GM12878 (cell line): ENCODE measurements at regions of chr12 and their contacts with region 1.

Region 1: GRCh38 chr12:98332642-98333041 is 182.7 kb upstream of the TMPO start:
- DNase-seq: peak; percentile 64
- ATAC-seq: peak; percentile 91
- H3K4me3 ChIP-seq: no peak overlapping the region
- H3K27ac ChIP-seq: no peak overlapping the region
- H3K4me1 ChIP-seq: no peaks in the 10 kb centered on the region
- H3K27me3 ChIP-seq: peaks cover 0 to 3% of the 10 kb centered on the region in 2 experiments; a peak in 1 of 4 replicates
- CTCF ChIP-seq: peak; percentile 12 to 57 (median 18); a peak in 3 of 6 replicates
- EP300 ChIP-seq: peak in 1 of 2 experiments; percentile 8; a peak in 1 of 4 replicates
- POLR2A ChIP-seq: no peak
- RAD21 ChIP-seq: no peak

Region 2: DNA sequence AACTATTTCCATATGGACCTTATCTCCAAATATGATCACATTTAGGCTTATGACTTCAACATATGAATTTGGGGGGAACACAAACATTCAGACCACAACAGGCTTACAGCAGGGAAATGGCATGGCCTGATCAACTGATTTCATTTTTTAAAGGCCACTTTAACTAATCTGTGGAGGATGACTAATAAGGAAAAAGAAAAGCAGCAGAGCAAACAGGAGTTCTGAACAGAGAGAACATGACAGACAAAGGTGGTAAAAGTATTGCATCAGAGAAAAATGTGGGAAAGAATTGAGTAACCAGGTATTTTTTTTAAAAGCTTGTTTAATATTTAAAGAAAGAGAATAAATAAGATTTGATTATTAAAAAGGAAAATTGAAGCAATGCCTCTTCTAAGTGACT is 183.4 kb before region 1 on chr12:
- CTCF ChIA-PET with region 1: interaction called, 8 read pairs
- POLR2A ChIA-PET with region 1: interaction called, 4 read pairs
- RAD21 ChIA-PET with region 1: interaction called, 15 read pairs
- SMC1A ChIA-PET with region 1: interaction called, 21 read pairs
- in situ Hi-C with region 1: no loop called
- intact Hi-C with region 1: loop called (anchors 2 kb)
- DNase-seq: peak; percentile 3
- ATAC-seq: peak; percentile 90
- H3K4me3 ChIP-seq: no peak overlapping the region
- H3K27ac ChIP-seq: no peak overlapping the region
- H3K4me1 ChIP-seq: no peaks in the 10 kb centered on the region
- H3K27me3 ChIP-seq: no peaks in the 10 kb centered on the region; a peak in 1 of 4 replicates
- CTCF ChIP-seq: no peak
- EP300 ChIP-seq: peak in 1 of 2 experiments; percentile 52; a peak in 1 of 4 replicates
- POLR2A ChIP-seq: no peak
- RAD21 ChIP-seq: no peak

Region 3: DNA sequence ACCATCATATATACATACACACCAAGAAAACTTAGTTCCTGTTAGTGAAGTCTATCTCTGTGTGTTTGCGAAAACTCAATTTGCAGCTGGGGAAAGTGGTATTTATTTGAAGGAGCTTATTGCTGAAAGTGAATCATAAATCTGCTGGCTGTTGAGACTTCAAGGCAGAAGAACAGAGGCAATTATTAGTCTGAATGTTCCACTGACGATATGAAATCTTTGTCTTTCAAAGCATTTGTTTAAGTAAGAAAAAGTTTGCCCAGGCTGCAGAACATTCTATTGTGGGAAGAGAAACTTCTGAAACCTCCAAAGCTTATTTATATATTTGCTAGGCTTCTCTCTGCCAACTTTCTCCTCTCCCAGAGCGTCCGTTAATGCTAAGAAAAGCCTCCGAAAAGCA is 72.9 kb before region 1 on chr12:
- CTCF ChIA-PET with region 1: interaction called, 3 read pairs
- POLR2A ChIA-PET with region 1: interaction called, 10 read pairs
- RAD21 ChIA-PET with region 1: interaction called, 6 read pairs
- SMC1A ChIA-PET with region 1: interaction called, 16 read pairs
- in situ Hi-C with region 1: no loop called
- intact Hi-C with region 1: no loop called
- DNase-seq: peak; percentile 38
- ATAC-seq: peak; percentile 79
- H3K4me3 ChIP-seq: no peak overlapping the region
- H3K27ac ChIP-seq: no peak overlapping the region; the same call in 1 of the 2 replicates
- H3K4me1 ChIP-seq: no peaks in the 10 kb centered on the region
- H3K27me3 ChIP-seq: no peaks in the 10 kb centered on the region
- CTCF ChIP-seq: no peak
- EP300 ChIP-seq: no peak
- POLR2A ChIP-seq: no peak
- RAD21 ChIP-seq: no peak

Region 4: GRCh38 chr12:98319716-98320425 is 12.8 kb before region 1 on chr12:
- CTCF ChIA-PET with region 1: interaction called, 4 read pairs
- POLR2A ChIA-PET with region 1: interaction called, 10 read pairs
- RAD21 ChIA-PET with region 1: interaction called, 10 read pairs
- SMC1A ChIA-PET with region 1: interaction called, 10 read pairs
- in situ Hi-C with region 1: no loop called
- intact Hi-C with region 1: no loop called
- DNase-seq: no peak
- ATAC-seq: peak; percentile 4; the same call in 2 of the 3 replicates
- H3K4me3 ChIP-seq: no peak overlapping the region
- H3K27ac ChIP-seq: no peak overlapping the region
- H3K4me1 ChIP-seq: peaks cover 2% of the 10 kb centered on the region; the same call in 1 of the 2 replicates
- H3K27me3 ChIP-seq: no peaks in the 10 kb centered on the region
- CTCF ChIP-seq: no peak
- EP300 ChIP-seq: no peak
- POLR2A ChIP-seq: no peak
- RAD21 ChIP-seq: no peak

Region 5: DNA sequence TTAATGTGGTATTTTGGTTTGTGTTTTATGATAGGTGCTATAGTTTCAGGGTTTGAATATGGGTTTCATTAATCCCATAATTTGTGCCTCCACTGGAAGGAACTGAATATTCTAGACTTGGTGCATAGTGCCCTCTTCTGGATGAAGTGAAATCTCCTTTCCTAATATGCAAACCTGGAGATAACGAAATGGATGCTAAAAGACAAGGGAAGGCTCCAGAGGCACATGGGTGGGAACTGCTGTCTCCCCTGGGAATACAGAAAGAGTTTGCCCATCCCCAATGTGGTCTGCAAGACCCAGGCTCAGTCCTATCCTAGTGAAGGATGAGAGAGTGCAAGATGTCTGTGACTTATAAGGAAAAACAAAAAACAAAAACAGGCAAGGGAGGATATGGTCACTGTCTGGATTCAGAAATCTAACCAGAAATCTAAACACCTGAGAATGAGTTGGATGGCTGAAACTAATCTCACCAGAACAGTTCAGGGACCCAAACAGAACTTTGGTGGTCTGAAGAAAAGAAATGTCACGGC is 40.4 kb after region 1 on chr12:
- CTCF ChIA-PET with region 1: interaction called, 8 read pairs
- POLR2A ChIA-PET with region 1: no interaction called
- RAD21 ChIA-PET with region 1: interaction called, 15 read pairs
- SMC1A ChIA-PET with region 1: interaction called, 35 read pairs
- in situ Hi-C with region 1: no loop called
- intact Hi-C with region 1: loop called (anchors 2 kb)
- DNase-seq: no peak
- ATAC-seq: peak; percentile 87
- H3K4me3 ChIP-seq: no peak overlapping the region
- H3K27ac ChIP-seq: no peak overlapping the region
- H3K4me1 ChIP-seq: no peaks in the 10 kb centered on the region
- H3K27me3 ChIP-seq: no peaks in the 10 kb centered on the region; a peak in 1 of 4 replicates
- CTCF ChIP-seq: peak; percentile 56 to 77 (median 56); a peak in 5 of 6 replicates
- EP300 ChIP-seq: no peak
- POLR2A ChIP-seq: no peak
- RAD21 ChIP-seq: peak; percentile 83

Region 6: DNA sequence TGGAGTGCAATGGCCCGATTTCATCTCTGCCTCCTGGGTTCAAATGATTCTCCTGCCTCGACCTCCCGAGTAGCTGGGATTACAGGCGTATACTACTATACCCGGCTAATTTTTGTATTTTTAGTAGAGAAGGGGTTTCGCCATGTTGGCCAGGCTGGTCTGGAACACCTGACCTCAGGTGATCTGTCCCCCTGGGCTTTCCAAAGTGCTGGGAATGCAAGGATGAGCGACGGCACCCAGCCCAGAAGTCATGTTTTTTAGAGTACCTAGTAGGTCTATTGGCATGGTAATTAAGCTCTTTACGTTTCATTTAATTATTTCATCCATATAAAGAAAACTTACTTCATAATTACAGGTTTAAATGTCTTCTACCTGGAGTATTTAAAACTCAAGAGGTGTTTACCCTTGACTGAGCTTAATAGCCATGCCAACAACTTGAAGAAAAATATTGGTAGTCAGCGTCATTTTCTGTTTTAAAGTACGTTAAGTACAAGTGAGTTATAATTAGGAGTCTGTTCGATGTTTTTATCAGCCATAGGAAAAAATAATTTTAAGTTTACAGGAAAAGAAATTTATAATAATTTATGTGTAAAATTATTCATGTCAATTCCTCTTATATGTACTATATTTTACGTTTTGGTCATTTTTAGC is 186.7 kb after region 1 on chr12:
- CTCF ChIA-PET with region 1: no interaction called
- POLR2A ChIA-PET with region 1: no interaction called
- RAD21 ChIA-PET with region 1: no interaction called
- SMC1A ChIA-PET with region 1: no interaction called
- in situ Hi-C with region 1: no loop called
- intact Hi-C with region 1: no loop called
- DNase-seq: no peak
- ATAC-seq: no peak
- H3K4me3 ChIP-seq: peak overlapping the region; percentile 92
- H3K27ac ChIP-seq: no peak overlapping the region
- H3K4me1 ChIP-seq: no peaks in the 10 kb centered on the region; the same call in 1 of the 2 replicates
- H3K27me3 ChIP-seq: no peaks in the 10 kb centered on the region
- CTCF ChIP-seq: no peak
- EP300 ChIP-seq: no peak
- POLR2A ChIP-seq: no peak
- RAD21 ChIP-seq: no peak

Region 7: DNA sequence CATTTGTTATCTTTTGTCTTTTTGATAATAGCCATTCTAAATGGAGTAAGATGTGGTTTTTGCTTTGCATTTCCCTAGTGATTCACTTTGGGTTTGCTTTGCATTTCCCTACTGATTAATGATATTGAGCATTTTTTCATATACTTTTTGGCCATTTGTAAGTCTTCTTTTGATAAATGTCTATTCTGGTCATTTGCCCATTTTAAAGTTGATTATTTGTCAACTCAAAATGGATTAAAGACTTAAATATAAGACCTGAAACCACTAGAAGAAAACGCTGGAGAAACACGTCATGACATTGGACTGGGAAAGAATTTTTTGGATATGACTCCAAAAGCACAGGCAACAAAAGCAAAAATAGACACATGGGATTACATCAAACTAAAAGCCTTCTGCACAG is 460.5 kb after region 1 on chr12:
- CTCF ChIA-PET with region 1: no interaction called
- POLR2A ChIA-PET with region 1: no interaction called
- RAD21 ChIA-PET with region 1: no interaction called
- SMC1A ChIA-PET with region 1: no interaction called
- in situ Hi-C with region 1: no loop called
- intact Hi-C with region 1: no loop called
- DNase-seq: no peak
- ATAC-seq: no peak
- H3K4me3 ChIP-seq: no peak overlapping the region
- H3K27ac ChIP-seq: no peak overlapping the region
- H3K4me1 ChIP-seq: no peaks in the 10 kb centered on the region
- H3K27me3 ChIP-seq: 0 out of 4 replicates have a peak, but pooled peaks cover 0 to 5% of the 10 kb centered on the region in 2 experiments
- CTCF ChIP-seq: no peak
- EP300 ChIP-seq: no peak
- POLR2A ChIP-seq: no peak
- RAD21 ChIP-seq: no peak